Activated T-helper 2 cell treated with anti-CD3 and anti-CD28 coated beads, Interferon-gamma antibody, Interleukin-2, Interleukin-4, amounts not matched to agents 10 μg/mL and 5 μg/mL and 100 μg/mL, durations not matched to agents 14 hours and 24 hours and 36 hours (primary cell): ENCODE measurements at regions of chr11 and their contacts with region 1.

Region 1: DNA sequence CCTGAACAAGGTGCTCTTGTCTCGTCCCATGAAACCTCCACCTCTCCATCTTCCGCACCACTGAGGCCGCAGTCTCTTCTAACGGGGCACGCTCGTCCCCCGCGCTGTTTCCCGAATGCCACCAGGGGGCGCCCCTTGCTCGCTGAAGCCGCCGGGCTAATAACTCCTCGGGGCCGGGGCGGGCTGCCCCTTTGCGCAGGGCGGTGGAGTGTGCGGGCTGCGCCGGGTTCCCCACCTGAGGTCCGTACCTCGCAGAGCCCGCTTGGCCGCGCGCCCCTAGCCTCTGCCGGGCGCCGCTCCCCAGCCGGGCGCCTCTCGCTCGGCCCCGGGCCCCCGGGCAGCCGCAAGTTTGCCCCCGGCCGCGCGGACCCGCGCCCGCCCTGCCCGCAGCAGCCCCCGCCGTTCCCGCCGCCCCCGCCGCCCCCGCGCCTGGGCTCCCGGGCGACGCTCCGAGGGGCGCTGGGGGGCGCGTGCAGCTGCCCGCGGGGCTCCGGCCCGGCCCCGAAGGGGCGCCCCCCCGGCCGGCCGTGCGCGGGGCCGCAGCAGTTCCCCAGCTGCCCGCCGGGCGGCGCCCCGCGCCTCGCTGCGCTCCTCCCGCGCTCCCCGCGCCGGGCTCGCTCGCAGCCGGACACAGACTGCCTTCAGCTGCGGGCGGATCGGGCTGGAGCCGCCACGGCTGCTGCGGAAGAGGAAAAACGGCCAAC is at the start of gene GRIK4:
- DNase-seq: peak; percentile 64
- H3K4me3 Mint-ChIP-seq: no peak within 1 kb of the TSS
- H3K27ac Mint-ChIP-seq: no peak within 1 kb of the TSS
- H3K4me1 Mint-ChIP-seq: peaks cover 2% of the 10 kb centered on the region
- H3K27me3 Mint-ChIP-seq: peaks cover 48% of the 10 kb centered on the region
- total RNA-seq, gene GRIK4: not detected in 2 replicates

Region 2: DNA sequence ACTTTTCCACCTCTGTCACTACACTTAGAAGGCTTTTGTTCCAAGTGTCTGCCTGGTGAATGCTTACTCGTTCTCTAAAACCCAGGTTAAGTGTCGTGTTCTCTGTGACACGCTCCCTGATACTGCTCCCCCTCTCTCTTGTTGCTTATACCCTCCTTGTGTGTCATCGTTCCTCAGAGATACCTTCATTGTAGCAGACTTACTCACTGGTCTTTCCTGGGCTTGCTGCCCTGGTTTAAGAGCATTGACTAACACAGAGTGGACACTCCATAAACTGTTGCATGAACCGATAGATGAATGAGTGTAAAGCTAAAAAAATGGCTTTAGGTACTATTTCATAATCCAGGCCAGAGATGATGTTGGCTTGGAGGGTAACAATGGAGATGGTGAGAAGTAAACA is 171.6 kb after region 1 on chr11:
- intact Hi-C with region 1: loop called (anchors 1 kb)
- DNase-seq: no peak
- H3K4me3 Mint-ChIP-seq: no peak overlapping the region
- H3K27ac Mint-ChIP-seq: no peak overlapping the region
- H3K4me1 Mint-ChIP-seq: no peaks in the 10 kb centered on the region
- H3K27me3 Mint-ChIP-seq: peaks cover 9% of the 10 kb centered on the region

Region 3: GRCh38 chr11:120801801-120802689 is 290.8 kb after region 1 on chr11:
- intact Hi-C with region 1: loop called (anchors 5 kb)
- DNase-seq: peak; percentile 17
- H3K4me3 Mint-ChIP-seq: no peak overlapping the region
- H3K27ac Mint-ChIP-seq: no peak overlapping the region
- H3K4me1 Mint-ChIP-seq: no peaks in the 10 kb centered on the region
- H3K27me3 Mint-ChIP-seq: no peaks in the 10 kb centered on the region

Region 4: DNA sequence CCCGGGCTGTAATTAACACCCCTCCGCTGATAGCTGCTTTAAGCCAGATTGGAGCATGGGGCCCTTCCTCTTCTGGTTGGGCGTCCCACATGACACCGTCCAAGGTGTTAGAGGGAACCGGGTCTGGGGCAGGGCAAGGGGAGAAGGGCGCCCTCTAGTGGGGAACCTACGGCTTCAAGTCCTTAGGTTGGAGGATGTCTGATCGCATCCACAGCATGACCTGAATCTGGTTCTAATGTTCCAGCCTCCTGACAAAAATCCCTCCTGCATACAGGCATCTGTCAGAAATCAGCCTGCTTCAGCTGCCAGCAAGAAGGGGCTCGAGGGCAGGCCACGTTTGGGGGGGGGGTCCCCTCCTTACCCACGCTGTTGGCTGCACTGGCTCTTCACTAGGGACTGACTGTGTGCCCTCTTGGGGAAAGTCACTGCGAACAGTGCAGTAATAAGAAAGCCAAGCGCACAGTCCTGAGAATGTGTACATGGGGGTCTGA is 418.4 kb after region 1 on chr11:
- intact Hi-C with region 1: loop called (anchors 1 kb)
- DNase-seq: no peak
- H3K4me3 Mint-ChIP-seq: no peak overlapping the region
- H3K27ac Mint-ChIP-seq: no peak overlapping the region
- H3K4me1 Mint-ChIP-seq: no peaks in the 10 kb centered on the region
- H3K27me3 Mint-ChIP-seq: peaks cover 2% of the 10 kb centered on the region

Region 5: DNA sequence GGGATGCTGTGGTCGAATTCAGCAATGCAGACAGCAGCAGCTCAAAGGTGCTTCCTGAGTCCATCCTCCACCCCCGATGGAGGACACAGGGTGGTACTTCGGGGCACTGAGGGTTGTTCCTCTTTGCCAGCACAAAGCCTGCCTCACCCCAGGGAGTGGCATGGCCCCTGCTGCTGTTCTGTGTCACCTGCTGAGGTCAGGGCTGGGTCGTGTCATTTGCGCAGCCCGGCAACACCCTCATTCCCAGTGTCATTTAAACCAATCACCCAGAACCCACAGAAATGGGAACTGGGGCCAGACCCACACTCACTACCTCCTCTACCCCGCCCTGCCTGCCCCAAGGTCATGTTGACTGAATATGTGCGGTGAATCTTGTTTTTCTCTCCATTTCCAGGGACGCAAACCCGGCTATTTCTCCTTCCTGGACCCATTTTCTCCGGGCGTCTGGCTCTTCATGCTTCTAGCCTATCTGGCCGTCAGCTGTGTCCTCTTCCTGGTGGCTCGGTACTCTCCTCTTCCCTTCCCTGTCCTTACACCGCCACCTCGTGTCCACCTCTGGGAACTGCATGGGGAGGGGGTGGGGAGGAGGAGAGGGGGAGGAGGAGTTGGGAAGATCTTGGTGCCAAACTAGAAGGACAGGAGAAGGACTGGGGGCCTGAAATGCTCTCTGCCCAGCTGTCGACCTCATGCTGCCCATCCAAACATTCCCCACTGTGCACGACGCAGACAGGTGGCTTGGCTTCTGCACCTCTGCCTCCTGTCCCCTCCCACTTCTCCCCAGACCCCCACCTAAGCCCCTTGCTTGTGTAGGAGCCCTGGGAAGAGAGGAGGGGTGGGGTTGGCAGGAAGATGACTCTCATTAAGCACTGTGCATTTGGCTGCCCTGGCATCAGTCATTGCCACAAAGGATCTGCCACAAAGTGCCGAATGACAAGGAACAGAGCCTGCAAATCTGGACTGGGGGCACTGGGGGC is 441.5 kb after region 1 on chr11:
- intact Hi-C with region 1: loop called (anchors 2 kb)
- DNase-seq: peak; percentile 39
- H3K4me3 Mint-ChIP-seq: peak overlapping the region; percentile 34
- H3K27ac Mint-ChIP-seq: no peak overlapping the region
- H3K4me1 Mint-ChIP-seq: peaks cover 6% of the 10 kb centered on the region
- H3K27me3 Mint-ChIP-seq: peaks cover 13% of the 10 kb centered on the region

Region 6: GRCh38 chr11:121194731-121195596 is 683.7 kb after region 1 on chr11:
- intact Hi-C with region 1: loop called (anchors 5 kb)
- DNase-seq: peak; percentile 40
- H3K4me3 Mint-ChIP-seq: no peak overlapping the region
- H3K27ac Mint-ChIP-seq: no peak overlapping the region
- H3K4me1 Mint-ChIP-seq: no peaks in the 10 kb centered on the region
- H3K27me3 Mint-ChIP-seq: peaks cover 20% of the 10 kb centered on the region